Activated CD8-positive, alpha-beta T cell treated with anti-CD3 and anti-CD28 coated beads, Interleukin-2, amount 10 ng/mL, durations not matched to agents 7 days and 5 days (primary cell): ENCODE measurements at regions of chr15 and their contacts with region 1.

Region 1: GRCh38 chr15:98779463-98780071 is 131.2 kb downstream of the IGF1R start:
- DNase-seq: peak; percentile 76
- ATAC-seq: peak; percentile 86
- H3K4me3 Mint-ChIP-seq: no peak overlapping the region
- H3K27ac Mint-ChIP-seq: no peak overlapping the region
- H3K4me1 Mint-ChIP-seq: peaks cover 27% of the 10 kb centered on the region
- H3K27me3 Mint-ChIP-seq: no peaks in the 10 kb centered on the region

Region 2: DNA sequence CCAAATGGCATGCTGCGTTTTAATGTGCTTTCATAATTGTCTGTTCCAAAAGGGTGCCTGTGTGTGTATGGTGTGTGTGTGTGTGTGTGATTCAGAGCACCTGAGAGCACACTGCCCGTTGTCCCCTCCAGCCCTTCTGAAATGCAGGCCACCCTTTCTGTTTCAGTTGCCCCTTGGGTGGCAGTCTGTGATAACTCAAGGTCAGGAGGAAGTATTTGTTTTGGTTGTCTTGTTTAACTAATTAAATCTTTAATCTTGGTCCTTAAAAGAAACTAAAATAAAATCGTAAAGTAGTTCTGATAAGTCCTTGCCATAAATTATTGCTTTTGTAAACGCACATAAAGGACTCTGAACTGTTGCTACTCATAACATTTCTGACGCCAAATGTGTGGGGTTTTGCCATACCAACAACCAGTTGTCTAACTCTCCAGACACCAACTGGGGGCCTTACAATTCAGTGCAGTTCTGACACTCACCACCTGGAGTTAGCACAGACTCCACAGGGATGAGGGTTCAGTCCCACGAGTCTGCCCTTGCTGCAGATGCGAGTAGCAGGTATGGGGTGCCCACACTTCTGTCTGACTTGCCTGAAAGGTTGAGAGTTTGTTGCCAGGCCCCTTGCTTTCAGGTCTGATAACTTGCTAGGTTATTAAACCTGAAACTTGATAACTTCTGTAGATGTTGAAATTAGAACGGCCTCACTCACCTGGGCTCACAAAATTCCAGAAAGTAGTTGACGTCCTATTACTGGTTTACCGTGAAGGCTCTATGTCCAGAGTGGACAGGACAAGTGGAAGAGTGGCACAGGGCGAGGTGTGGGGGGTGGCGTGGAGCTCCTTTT is 26.1 kb after region 1 on chr15:
- CTCF ChIA-PET with region 1: interaction called, 10 read pairs
- POLR2A ChIA-PET with region 1: no interaction called
- DNase-seq: no peak
- ATAC-seq: no peak
- H3K4me3 Mint-ChIP-seq: no peak overlapping the region
- H3K27ac Mint-ChIP-seq: no peak overlapping the region
- H3K4me1 Mint-ChIP-seq: peaks cover 13% of the 10 kb centered on the region
- H3K27me3 Mint-ChIP-seq: no peaks in the 10 kb centered on the region

Region 3: DNA sequence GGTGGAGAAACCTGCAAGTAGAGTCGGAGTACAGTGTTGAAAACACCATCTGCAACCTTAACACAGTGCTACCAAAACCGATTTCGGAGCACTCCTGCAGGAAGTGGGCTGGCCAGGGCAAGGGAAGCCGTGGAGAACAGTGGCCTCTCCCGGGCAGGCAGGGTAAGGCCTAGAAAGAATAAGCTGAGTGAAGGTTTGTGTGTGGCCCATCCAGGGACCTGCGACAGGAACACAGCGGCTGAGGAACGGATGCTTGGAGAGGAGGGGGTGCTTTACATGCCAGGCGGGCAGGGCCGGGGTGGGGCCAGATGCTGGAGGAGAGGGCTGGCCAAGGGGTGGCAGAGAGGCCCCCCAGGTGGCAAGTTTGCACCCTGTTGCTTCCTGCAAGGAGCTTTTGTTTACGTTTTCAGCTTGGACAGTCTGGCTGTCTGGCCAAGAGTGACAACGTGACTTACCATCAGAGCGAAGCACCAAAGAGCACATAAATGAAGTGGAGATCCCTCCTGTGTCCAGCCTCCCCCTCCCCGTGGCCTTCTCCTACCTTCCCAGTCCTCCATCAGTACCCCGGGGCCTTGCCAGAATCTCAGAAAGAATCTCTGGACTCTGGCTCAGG is 71.5 kb after region 1 on chr15:
- CTCF ChIA-PET with region 1: interaction called, 13 read pairs
- POLR2A ChIA-PET with region 1: no interaction called
- DNase-seq: peak; percentile 83
- ATAC-seq: peak; percentile 69
- H3K4me3 Mint-ChIP-seq: peak overlapping the region; percentile 53
- H3K27ac Mint-ChIP-seq: peak overlapping the region; percentile 79
- H3K4me1 Mint-ChIP-seq: peaks cover 30% of the 10 kb centered on the region
- H3K27me3 Mint-ChIP-seq: no peaks in the 10 kb centered on the region

Region 4: DNA sequence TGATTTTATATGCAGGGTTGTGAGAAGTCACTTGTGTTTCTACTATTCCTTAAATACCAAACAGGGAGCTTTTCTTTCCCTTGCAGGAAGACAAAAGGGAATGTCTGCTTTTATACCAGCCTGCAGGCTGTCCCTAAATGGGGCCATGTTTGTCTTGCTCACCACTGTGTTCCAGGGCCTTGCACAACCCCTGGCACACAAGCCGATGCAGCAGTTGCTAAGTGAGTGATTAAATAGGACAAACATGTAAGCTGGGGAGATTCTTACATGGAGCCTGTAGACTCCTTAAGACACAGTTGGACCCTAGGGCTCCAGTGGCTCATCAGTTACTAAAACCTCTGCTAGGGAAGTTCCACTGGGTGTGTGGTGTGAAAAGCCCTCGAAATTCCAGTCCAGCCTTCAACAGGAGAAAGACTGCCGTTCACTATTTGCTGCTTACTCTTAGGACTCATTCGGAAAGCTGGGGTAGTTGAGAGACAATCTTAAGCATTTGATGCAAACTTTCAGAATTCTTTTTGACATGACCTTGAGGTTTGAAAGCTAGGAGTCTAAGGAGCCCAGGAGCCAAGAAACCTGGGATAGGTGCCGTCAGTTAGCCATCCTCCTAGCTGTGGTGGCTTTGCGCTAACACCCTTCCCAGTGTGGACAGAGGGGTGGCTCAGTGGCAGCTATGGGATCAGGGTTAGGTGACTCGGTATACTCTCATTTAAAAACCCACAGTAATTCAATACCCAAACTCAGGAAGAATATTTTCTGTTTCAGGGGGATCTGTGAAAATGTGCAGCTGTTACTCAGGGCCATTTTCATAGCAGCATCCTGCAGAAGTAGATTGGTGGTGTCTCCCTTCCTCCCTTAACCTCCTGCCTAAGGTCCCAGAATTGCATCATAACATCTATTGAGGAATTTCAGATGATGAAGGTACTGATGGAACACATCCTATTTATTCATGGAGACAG is 364.4 kb after region 1 on chr15:
- CTCF ChIA-PET with region 1: no interaction called
- POLR2A ChIA-PET with region 1: no interaction called
- DNase-seq: no peak
- ATAC-seq: no peak
- H3K4me3 Mint-ChIP-seq: no peak overlapping the region
- H3K27ac Mint-ChIP-seq: no peak overlapping the region
- H3K4me1 Mint-ChIP-seq: no peaks in the 10 kb centered on the region
- H3K27me3 Mint-ChIP-seq: no peaks in the 10 kb centered on the region